ENCODE measurements at regions of chr7 and their contacts with region 1.

Region 1: DNA sequence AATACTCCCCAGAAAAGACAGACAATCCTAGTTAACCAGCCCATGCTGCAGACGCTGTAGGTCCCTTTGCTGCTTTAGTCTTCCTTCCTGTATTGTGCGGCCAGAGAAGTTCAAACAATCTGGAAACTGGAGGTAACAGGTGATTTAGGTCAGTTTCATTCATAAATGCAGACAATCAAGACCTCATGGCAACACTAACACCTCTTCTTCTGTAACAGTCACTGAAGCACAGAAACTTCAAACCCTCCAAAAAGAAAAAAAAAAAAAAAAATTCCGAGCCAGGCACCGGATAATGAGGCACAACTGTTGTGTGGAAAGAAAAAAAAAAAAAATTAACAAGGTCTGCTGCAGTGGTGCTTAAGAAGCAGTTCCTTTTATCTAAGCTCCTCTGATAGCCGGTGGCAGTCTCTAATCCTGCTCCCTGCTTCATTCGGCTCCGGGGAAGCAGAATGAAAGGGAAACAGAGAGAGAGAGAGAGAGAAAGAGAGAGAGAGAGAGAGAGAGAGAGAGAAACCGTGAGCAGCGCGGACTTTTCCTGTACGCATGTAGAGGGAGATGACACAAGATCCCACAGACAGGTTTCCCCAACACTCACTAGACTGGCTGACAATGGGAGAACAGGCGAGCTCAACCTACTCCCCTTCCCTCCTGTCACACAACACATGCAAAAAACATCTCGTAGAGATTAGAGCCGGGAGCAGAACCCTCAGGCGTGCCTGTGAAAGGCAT is at the start of gene SEMA3A:
- DNase-seq: peak; percentile 70
- H3K4me3 Mint-ChIP-seq: peak within 1 kb of the TSS; percentile 81
- H3K27ac Mint-ChIP-seq: peak within 1 kb of the TSS; percentile 33
- H3K4me1 Mint-ChIP-seq: peaks cover 6% of the 10 kb centered on the region
- H3K27me3 Mint-ChIP-seq: no peaks in the 10 kb centered on the region
- CTCF ChIP-seq: no peak
- total RNA-seq, gene SEMA3A: 1.5 and 3.2 TPM in 2 replicates

Region 2: DNA sequence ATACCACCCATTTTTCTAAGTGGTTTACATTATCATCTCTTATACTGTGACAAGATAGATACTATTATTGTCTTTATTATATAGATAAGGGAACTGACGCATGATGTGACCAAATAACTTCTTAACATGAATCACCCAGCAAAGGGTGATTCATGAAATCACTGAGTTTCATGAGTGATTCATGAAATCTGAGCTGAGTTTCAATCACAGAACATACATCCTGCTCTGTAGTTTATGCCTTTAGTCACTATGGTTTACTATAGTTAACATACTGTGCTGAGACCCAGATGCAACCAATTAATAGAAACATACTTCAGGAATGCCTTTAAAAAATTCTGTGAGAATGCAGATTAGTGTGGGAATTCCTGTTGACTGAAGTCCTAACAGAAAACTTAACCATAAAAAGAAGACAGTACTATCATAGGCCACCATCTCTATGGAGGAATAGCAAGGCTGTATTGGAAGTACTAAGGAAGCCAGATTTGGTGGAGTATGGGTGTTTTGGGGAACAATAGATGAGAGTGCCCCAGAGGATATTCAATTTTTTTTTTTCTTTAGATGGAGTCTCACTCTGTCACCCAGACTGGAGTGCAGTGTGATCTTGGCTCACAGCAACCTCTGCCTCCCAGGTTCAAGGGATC is 42.9 kb after region 1 on chr7:
- CTCF ChIA-PET with region 1: no interaction called
- POLR2A ChIA-PET with region 1: no interaction called
- intact Hi-C with region 1: loop called (anchors 5 kb)
- DNase-seq: peak; percentile 87
- H3K4me3 Mint-ChIP-seq: no peak overlapping the region
- H3K27ac Mint-ChIP-seq: peak overlapping the region; percentile 31
- H3K4me1 Mint-ChIP-seq: peaks cover 21% of the 10 kb centered on the region
- H3K27me3 Mint-ChIP-seq: no peaks in the 10 kb centered on the region
- CTCF ChIP-seq: no peak

Region 3: GRCh38 chr7:84455788-84456187 is 261.1 kb after region 1 on chr7:
- CTCF ChIA-PET with region 1: no interaction called
- POLR2A ChIA-PET with region 1: interaction called, 3 read pairs
- intact Hi-C with region 1: loop called (anchors 1 kb)
- DNase-seq: peak; percentile 20
- H3K4me3 Mint-ChIP-seq: no peak overlapping the region
- H3K27ac Mint-ChIP-seq: no peak overlapping the region
- H3K4me1 Mint-ChIP-seq: no peaks in the 10 kb centered on the region
- H3K27me3 Mint-ChIP-seq: no peaks in the 10 kb centered on the region
- CTCF ChIP-seq: no peak